ENCODE measurements at regions of chr17 and their contacts with region 1.

Region 1: GRCh38 chr17:38674749-38675615 is at the start of gene EPOP:
- DNase-seq: peak; percentile 90 to 93
- ATAC-seq: peak; percentile 81 to 87
- H3K4me3 ChIP-seq: peak within 1 kb of the TSS; percentile 75
- H3K27ac ChIP-seq: peak within 1 kb of the TSS; percentile 80 to 92
- H3K4me1 ChIP-seq: peaks cover 41% of the 10 kb centered on the region
- CTCF ChIP-seq: no peak; the same call in 2 of the 3 replicates
- EP300 ChIP-seq: no peak
- POLR2A ChIP-seq: peak; percentile 80
- RAD21 ChIP-seq: no peak
- polyA plus RNA-seq, gene EPOP: 4.6 and 5.1 TPM in 2 replicates

Region 2: GRCh38 chr17:38685491-38685890 is 10.5 kb after region 1 on chr17:
- CTCF ChIA-PET with region 1: interaction called, 36 read pairs
- POLR2A ChIA-PET with region 1: no interaction called
- DNase-seq: no peak
- ATAC-seq: no peak; a peak in 1 of 6 replicates
- H3K4me3 ChIP-seq: no peak overlapping the region
- H3K27ac ChIP-seq: no peak overlapping the region
- H3K4me1 ChIP-seq: no peaks in the 10 kb centered on the region
- CTCF ChIP-seq: no peak
- EP300 ChIP-seq: no peak
- POLR2A ChIP-seq: no peak
- RAD21 ChIP-seq: no peak

Region 3: DNA sequence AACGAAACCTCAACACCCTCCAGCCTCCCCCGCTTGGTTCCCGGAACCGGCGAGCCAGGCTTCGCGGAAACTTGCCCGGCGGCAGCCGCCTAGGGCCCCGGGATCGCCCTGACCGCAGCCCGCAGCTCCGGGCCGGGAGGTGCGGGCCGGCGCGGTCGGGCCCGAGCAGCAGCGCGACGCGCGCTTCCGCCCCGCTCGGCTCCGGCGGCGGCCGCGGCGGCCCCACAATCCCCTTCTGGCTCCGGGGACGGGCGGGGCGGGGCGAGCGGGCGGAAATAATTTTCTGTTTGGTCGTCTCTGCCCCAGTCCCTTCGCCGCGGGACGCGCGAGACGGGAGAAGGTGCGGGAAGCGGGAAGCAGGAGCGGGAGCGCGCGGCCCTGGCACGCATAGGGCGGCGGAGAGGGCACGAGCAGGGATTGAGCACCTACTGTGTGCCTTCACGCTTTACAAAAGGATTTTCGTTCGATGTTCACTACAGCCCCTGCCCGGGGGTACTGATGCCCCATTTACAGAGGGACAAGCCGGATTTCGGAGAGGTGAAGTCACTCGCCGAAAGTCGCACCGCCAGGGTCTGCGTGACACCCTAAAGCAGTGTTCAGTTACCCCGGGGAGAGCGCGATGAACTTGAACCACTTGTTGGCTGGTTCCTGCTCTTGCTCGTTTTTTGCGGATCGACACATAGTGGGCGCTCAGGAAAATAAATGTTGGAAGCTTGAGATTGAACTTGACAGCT is 27.4 kb after region 1 on chr17:
- CTCF ChIA-PET with region 1: interaction called, 41 read pairs
- POLR2A ChIA-PET with region 1: interaction called, 3 read pairs
- DNase-seq: peak; percentile 90 to 94
- ATAC-seq: peak; percentile 67 to 78
- H3K4me3 ChIP-seq: peak overlapping the region; percentile 56
- H3K27ac ChIP-seq: peak overlapping the region; percentile 84 to 96
- H3K4me1 ChIP-seq: peaks cover 47% of the 10 kb centered on the region
- CTCF ChIP-seq: no peak
- EP300 ChIP-seq: no peak; a peak in 1 of 5 replicates
- POLR2A ChIP-seq: peak; percentile 85
- RAD21 ChIP-seq: no peak

Region 4: GRCh38 chr17:38724337-38724988 is 49.5 kb after region 1 on chr17:
- CTCF ChIA-PET with region 1: interaction called, 56 read pairs
- POLR2A ChIA-PET with region 1: no interaction called
- DNase-seq: no peak
- ATAC-seq: no peak
- H3K4me3 ChIP-seq: no peak overlapping the region
- H3K27ac ChIP-seq: no peak overlapping the region
- H3K4me1 ChIP-seq: peaks cover 9% of the 10 kb centered on the region; the same call in 2 of the 3 replicates
- CTCF ChIP-seq: no peak
- EP300 ChIP-seq: no peak
- POLR2A ChIP-seq: no peak
- RAD21 ChIP-seq: no peak

Region 5: GRCh38 chr17:38735161-38735997 is 60.4 kb after region 1 on chr17:
- CTCF ChIA-PET with region 1: interaction called, 105 read pairs
- POLR2A ChIA-PET with region 1: interaction called, 7 read pairs
- DNase-seq: peak; percentile 50 to 93
- ATAC-seq: peak in 1 of 2 experiments; percentile 32; a peak in 3 of 6 replicates
- H3K4me3 ChIP-seq: no peak overlapping the region
- H3K27ac ChIP-seq: peak overlapping the region in 1 of 2 experiments; percentile 34; a peak in 1 of 6 replicates
- H3K4me1 ChIP-seq: peaks cover 35% of the 10 kb centered on the region
- CTCF ChIP-seq: peak; percentile 96
- EP300 ChIP-seq: no peak
- POLR2A ChIP-seq: no peak
- RAD21 ChIP-seq: peak; percentile 71 to 78

Measured in A549 (cell line).